ENCODE measurements at regions of chr6 and their contacts with region 1.

Region 1: DNA sequence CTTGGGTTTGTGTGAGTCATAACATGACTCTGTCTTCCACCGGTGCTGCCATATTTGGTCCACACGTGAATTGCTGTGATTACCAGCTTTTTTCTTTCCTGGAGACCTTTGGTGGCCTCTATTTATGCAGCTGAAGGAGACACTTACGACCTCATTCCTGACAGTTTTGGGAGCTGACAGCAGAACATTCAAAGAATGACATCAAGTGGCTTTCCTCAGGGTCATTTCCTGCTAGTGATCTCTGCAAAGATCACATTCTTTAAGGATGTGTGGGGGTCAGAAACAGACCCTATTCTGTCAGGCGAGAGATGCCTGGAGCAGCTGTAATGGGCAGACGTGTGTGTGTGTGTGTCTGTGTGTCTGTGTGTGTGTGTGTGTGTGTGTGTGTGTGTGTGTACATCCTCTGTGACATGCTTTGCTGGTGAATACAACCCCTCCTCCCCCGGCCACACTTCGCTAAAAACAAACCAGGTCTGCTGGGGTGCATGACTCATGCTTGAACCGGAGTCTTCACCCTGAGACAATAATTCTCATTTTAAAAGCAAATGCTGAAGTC is 115.6 kb downstream of the TMEM170B start:
- DNase-seq: peak in 1 of 2 experiments; percentile 43
- H3K4me3 ChIP-seq: no peak overlapping the region
- H3K4me3 Mint-ChIP-seq: no peak overlapping the region
- H3K27ac Mint-ChIP-seq: peak overlapping the region; percentile 62
- H3K4me1 ChIP-seq: peaks cover 32% of the 10 kb centered on the region
- H3K4me1 Mint-ChIP-seq: peaks cover 17% of the 10 kb centered on the region
- H3K27me3 ChIP-seq: no peaks in the 10 kb centered on the region
- H3K27me3 Mint-ChIP-seq: no peaks in the 10 kb centered on the region
- CTCF ChIP-seq: no peak

Region 2: DNA sequence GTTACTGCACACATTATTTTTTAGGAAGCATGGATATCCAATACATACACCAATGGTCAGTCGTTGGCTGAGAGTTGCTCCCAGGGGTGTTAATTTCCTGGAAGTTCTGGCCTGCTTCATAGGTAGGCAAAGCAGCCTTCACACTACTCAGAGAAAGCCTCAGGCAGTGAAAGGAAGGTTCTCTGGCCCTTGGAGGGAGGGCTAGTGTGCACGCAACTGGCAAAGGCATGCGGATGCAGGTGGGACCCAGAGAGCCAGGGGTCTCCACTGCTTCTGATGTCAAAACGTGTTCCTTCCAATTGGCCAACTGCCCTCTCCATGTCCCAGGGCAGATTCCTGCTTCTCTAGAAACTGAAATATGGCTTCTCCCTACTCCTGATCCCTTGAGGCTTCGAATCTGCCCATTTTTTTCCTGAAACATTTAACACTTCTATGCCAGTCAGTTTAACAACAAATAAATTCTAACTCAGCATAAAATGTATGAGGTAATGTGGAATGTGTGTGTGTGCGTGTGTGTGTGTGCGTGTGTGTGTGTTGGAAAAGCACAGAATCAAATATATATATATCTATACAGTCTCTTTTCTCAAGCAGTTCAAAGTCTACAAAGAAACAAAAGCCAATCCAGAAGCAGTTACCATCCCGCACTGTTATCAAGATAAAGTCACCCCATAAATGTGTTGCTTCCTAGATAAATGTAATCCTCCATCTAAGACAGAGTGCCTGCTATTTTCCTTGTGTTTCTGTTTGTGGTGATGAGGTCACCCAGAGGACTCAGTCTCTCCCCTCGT is 265.0 kb after region 1 on chr6:
- CTCF ChIA-PET with region 1: no interaction called
- POLR2A ChIA-PET with region 1: no interaction called
- intact Hi-C with region 1: loop called (anchors 10 kb)
- DNase-seq: no peak
- H3K4me3 ChIP-seq: no peak overlapping the region
- H3K4me3 Mint-ChIP-seq: no peak overlapping the region
- H3K27ac Mint-ChIP-seq: peak overlapping the region; percentile 17
- H3K4me1 ChIP-seq: peaks cover 12% of the 10 kb centered on the region
- H3K4me1 Mint-ChIP-seq: peaks cover 6% of the 10 kb centered on the region
- H3K27me3 ChIP-seq: no peaks in the 10 kb centered on the region
- H3K27me3 Mint-ChIP-seq: no peaks in the 10 kb centered on the region
- CTCF ChIP-seq: no peak

Region 3: GRCh38 chr6:12011276-12012076 is 358.4 kb after region 1 on chr6:
- CTCF ChIA-PET with region 1: interaction called, 3 read pairs
- POLR2A ChIA-PET with region 1: no interaction called
- intact Hi-C with region 1: loop called (anchors 2 kb)
- DNase-seq: peak; percentile 95 to 97
- H3K4me3 ChIP-seq: peak overlapping the region; percentile 59
- H3K4me3 Mint-ChIP-seq: peak overlapping the region; percentile 96
- H3K27ac Mint-ChIP-seq: peak overlapping the region; percentile 95
- H3K4me1 ChIP-seq: peaks cover 26% of the 10 kb centered on the region
- H3K4me1 Mint-ChIP-seq: peaks cover 8% of the 10 kb centered on the region
- H3K27me3 ChIP-seq: no peaks in the 10 kb centered on the region
- H3K27me3 Mint-ChIP-seq: no peaks in the 10 kb centered on the region
- CTCF ChIP-seq: no peak

Region 4: GRCh38 chr6:12075067-12075563 is 422.0 kb after region 1 on chr6:
- CTCF ChIA-PET with region 1: no interaction called
- POLR2A ChIA-PET with region 1: no interaction called
- intact Hi-C with region 1: loop called (anchors 1 kb)
- DNase-seq: peak in 1 of 2 experiments; percentile 4
- H3K4me3 ChIP-seq: no peak overlapping the region
- H3K4me3 Mint-ChIP-seq: no peak overlapping the region
- H3K27ac Mint-ChIP-seq: no peak overlapping the region
- H3K4me1 ChIP-seq: no peaks in the 10 kb centered on the region
- H3K4me1 Mint-ChIP-seq: peaks cover 7% of the 10 kb centered on the region
- H3K27me3 ChIP-seq: no peaks in the 10 kb centered on the region
- H3K27me3 Mint-ChIP-seq: no peaks in the 10 kb centered on the region
- CTCF ChIP-seq: peak; percentile 30 to 60

Region 5: DNA sequence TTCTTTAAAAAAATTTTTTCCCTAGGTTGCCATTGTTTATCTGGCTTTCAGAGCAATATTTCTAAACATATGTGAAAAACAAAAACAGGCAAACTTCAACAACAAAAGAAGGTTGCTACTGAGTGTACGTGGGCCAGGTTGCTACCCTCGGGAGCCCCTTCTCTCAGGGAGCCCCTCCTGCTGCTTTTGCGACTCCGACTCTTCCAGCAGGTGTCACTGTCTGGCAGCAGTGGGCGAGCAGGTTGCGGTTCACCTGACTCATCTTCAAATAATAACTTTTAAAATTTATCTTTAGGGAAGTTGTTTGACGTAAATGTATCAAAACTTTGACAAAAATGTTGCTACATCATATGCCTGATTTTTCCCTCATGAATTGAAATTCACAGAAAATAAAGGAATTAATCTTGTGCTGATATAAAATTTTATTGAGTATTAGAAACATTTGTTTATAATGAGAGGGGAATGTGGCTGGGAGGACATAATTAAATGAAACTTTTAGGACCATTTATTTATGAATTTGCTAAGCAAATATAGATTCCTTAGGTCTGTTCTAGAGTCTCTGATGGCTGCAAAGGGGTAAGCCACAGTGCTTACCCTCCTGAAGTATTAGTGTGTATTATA is 497.8 kb after region 1 on chr6:
- CTCF ChIA-PET with region 1: no interaction called
- POLR2A ChIA-PET with region 1: no interaction called
- intact Hi-C with region 1: loop called (anchors 2 kb)
- DNase-seq: peak; percentile 52 to 71
- H3K4me3 ChIP-seq: no peak overlapping the region
- H3K4me3 Mint-ChIP-seq: no peak overlapping the region
- H3K27ac Mint-ChIP-seq: no peak overlapping the region
- H3K4me1 ChIP-seq: no peaks in the 10 kb centered on the region
- H3K4me1 Mint-ChIP-seq: no peaks in the 10 kb centered on the region
- H3K27me3 ChIP-seq: no peaks in the 10 kb centered on the region
- H3K27me3 Mint-ChIP-seq: no peaks in the 10 kb centered on the region
- CTCF ChIP-seq: peak; percentile 79 to 86

Region 6: GRCh38 chr6:12233693-12234571 is 580.8 kb after region 1 on chr6:
- CTCF ChIA-PET with region 1: no interaction called
- POLR2A ChIA-PET with region 1: no interaction called
- intact Hi-C with region 1: loop called (anchors 1 kb)
- DNase-seq: peak; percentile 45 to 61
- H3K4me3 ChIP-seq: no peak overlapping the region
- H3K4me3 Mint-ChIP-seq: no peak overlapping the region
- H3K27ac Mint-ChIP-seq: no peak overlapping the region
- H3K4me1 ChIP-seq: peaks cover 15% of the 10 kb centered on the region
- H3K4me1 Mint-ChIP-seq: peaks cover 3% of the 10 kb centered on the region
- H3K27me3 ChIP-seq: no peaks in the 10 kb centered on the region
- H3K27me3 Mint-ChIP-seq: no peaks in the 10 kb centered on the region
- CTCF ChIP-seq: peak; percentile 66 to 72

Measured in Caco-2 (cell line).